Right ventricle myocardium inferior (tissue), 1 donor: ENCODE measurements at regions of chr6 and their contacts with region 1.

Region 1: DNA sequence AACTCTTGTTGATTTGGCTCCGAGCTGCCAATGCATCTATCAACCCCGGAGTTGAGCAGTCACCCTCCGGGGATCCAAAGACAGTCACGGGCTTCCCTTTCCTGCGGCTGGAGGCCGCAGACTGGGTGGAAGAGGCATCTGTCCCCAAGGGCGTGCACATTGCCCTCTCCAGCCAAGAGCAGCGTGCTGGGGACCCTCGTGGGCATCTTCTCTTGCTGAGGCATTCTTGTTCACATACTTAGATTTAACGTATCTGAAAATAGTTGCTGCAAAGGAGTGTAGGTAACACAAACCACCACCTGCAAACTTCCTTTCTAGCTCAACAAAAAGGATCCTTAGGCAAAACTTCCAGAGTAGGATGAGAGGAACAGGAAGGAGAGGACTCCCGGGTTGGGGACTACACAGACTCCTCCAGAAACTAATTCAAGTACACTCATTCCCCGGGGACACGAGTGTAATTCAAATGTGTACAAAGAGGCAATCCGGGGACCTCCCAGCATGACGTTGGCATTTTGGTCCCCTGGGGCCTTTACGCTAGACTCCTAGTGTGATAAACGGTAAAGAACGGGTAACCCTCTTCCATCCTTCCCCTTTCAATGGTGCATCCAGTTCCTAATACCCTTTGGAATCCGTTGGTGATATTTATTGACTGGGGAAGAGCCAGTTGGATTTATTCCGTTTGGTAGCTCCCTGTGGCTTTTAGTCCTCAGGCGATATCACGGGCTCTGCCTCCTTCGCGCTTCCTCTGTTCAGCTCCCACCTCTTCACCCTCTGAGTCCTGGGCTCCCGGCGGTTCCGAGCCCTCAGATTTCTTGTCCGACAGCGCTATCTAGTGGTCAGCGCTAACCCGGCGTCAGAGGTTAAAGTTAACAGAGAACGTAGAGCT is 2.7 kb upstream of the COL12A1 start:
- DNase-seq: peak; percentile 92
- ATAC-seq: peak; percentile 74

Region 2: DNA sequence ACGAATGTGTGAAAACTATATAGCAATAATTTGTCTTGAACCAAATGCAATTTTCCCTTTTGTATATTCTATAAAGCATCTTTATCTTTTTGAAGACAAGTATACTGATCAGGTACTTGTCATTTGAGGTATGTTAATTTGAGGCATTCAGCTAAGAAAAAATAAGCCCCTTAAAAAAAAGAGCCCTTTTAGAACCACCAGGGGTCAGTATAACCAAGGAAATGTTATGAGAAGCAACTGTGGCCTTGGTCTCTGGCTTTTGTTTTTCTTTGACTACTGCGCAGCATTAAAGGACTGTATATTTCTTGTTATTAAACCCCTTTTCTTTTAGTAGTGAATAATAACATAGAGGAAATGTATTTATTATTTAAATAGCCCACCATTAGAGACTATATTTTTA is 1469.4 kb before region 1 on chr6:
- intact Hi-C with region 1: loop called (anchors 2 kb)
- DNase-seq: no peak
- ATAC-seq: no peak

Region 3: DNA sequence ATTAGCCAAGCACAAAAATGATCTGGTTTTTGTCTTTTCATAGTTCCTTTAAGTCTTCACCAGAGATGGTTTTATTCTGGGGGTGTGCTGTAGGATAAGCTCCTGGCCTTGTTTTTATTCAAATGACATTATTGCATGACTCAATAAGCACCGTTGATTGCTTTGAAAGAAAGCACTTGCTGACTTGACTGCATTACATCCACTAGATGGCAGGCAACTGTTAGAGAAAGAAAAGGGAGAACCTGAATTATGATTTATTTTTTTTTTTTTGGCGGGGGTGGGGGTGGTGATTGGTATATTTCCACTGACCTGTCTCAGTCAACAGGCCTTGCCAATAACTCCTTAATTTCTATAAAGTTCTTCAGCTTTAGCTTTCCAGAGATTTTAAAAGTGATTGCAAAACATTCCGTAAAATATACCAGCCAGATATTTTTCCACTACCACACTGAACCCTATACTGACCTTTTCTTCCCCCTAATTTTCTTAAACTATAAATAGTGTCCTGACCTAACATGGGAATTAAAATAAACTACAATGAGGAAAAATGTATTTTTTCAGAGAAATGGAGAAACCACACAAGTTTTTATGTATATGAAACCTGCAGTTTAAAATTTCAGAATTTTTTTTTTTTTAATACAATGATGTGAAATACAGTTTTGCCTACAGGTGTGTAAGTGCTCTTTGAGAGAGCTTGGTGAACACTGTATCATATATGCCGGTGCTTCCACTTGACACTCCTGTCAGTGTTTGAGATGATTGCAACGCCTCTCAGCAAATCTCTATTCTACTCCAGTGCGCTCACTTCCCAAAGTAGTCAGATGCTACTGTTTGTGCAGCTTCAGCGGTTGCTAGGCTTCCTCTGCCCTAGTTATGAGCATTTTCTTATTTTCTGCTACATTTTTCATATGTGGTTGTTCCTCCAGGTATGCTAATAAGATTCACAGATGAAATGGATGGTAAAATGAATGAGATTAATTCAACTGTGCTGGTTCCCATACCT is 1238.3 kb before region 1 on chr6:
- intact Hi-C with region 1: loop called (anchors 2 kb)
- DNase-seq: no peak
- ATAC-seq: peak; percentile 37

Region 4: GRCh38 chr6:74410630-74411029 is 797.9 kb before region 1 on chr6:
- intact Hi-C with region 1: loop called (anchors 10 kb)
- DNase-seq: no peak
- ATAC-seq: no peak

Region 5: GRCh38 chr6:74991573-74992332 is 216.8 kb before region 1 on chr6:
- intact Hi-C with region 1: loop called (anchors 10 kb)
- DNase-seq: no peak
- ATAC-seq: no peak

Region 6: DNA sequence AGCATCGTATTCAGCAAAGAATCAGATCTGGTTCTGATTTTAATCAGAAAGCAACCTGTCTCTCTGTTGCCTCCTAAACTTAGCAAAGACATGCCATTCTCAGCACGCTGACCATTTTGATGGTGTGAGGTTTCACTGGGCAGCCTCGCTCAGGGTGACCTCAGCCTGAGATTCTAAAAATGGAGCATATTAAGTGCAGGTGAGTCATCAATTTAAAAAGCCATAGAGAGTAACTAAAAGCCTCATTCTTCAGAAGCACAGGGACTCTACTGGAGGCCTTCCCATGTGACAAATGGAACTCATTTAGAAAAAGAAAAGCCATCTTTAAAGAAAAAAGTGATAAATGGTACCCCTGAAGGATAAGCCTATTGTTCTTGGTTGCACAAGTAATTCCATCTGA is 193.8 kb after region 1 on chr6:
- intact Hi-C with region 1: no loop called
- DNase-seq: no peak
- ATAC-seq: peak; percentile 75

Region 7: DNA sequence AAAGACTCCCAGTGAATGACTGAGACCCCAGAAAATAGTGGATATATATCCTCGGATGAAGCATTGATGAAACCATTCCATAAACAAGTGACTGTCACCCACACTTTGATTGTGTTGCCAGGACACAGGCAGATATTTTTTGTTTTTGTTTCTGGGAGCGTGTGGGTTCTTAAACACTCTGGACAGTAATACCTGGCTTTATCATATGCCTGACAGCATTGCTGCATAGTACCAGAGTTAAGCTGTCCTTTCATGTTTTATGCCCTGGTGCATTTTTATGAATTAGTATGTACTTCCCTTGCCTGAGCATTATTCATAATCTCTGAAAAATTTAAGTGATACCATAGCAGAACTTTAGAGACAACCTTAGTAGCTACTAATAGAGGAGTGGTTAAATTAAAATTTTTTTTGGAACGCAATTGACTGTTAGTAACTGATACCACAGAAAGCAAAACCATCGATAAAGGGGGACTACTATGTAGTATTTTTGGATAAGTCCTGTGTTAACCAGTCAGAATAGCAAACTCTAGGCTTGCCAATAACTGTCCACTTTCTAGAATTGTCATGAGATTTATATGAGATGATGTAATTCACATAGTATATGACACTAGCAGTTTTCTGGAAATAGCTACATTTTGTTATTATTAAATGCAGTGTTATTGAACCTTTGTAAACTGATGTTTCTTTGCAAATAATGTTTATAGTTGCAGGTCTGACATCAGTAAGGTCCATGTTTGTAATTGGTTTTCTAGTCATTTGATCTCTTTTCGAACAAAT is 423.5 kb after region 1 on chr6:
- intact Hi-C with region 1: no loop called
- DNase-seq: no peak
- ATAC-seq: peak; percentile 59